Prostate gland (tissue), 2 donors: ENCODE measurements at regions of chr15 and their contacts with region 1.

Region 1: GRCh38 chr15:75684642-75685041 is 28.0 kb downstream of the CSPG4 start:
- DNase-seq: no peak
- H3K4me3 ChIP-seq: no peak overlapping the region
- H3K27ac ChIP-seq: no peak overlapping the region
- H3K4me1 ChIP-seq: no peaks in the 10 kb centered on the region
- H3K27me3 ChIP-seq: no peaks in the 10 kb centered on the region
- CTCF ChIP-seq: no peak
- POLR2A ChIP-seq: no peak

Region 2: GRCh38 chr15:75631935-75632334 is 52.7 kb before region 1 on chr15:
- intact Hi-C with region 1: no loop called
- DNase-seq: no peak
- H3K4me3 ChIP-seq: no peak overlapping the region
- H3K27ac ChIP-seq: no peak overlapping the region
- H3K4me1 ChIP-seq: no peaks in the 10 kb centered on the region
- H3K27me3 ChIP-seq: no peaks in the 10 kb centered on the region
- CTCF ChIP-seq: no peak
- POLR2A ChIP-seq: no peak

Region 3: DNA sequence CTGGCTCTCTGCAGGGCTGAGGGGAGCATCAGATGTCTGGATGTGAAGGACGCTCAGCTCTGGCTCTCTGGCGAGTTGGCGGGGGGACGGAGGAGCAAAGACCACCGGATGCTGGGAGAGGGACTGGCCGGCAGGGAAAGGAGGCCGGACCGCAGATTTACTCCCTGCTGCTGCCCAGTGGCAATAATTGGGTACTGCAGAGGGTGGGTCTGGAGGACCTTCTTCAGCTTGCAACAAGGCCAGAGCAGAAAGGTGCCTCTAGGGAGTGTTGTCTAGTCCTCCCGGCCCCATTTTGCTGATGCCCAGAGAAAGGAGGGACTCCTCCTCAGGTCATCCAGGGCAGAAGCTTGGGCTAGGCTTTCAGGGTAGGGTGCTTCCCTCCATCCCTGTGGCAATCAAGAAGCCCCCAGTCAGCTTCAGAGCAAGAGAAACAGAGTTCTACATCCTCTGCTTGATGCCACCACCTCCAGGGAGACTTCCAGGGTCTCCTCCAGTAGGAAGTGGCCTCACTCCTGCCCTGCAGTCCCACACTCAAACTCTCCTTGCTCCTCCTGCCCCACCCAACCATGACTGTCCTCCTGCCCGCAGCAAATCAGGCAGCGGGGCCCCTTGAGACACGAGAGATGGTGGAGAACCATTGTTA is 48.3 kb after region 1 on chr15:
- intact Hi-C with region 1: loop called (anchors 5 kb)
- DNase-seq: peak; percentile 54
- H3K4me3 ChIP-seq: no peak overlapping the region
- H3K27ac ChIP-seq: no peak overlapping the region
- H3K4me1 ChIP-seq: no peaks in the 10 kb centered on the region
- H3K27me3 ChIP-seq: no peaks in the 10 kb centered on the region
- CTCF ChIP-seq: peak; percentile 71 to 91 (median 78)
- POLR2A ChIP-seq: no peak